GM12878 (cell line): ENCODE measurements at regions of chr10 and their contacts with region 1.

Region 1: DNA sequence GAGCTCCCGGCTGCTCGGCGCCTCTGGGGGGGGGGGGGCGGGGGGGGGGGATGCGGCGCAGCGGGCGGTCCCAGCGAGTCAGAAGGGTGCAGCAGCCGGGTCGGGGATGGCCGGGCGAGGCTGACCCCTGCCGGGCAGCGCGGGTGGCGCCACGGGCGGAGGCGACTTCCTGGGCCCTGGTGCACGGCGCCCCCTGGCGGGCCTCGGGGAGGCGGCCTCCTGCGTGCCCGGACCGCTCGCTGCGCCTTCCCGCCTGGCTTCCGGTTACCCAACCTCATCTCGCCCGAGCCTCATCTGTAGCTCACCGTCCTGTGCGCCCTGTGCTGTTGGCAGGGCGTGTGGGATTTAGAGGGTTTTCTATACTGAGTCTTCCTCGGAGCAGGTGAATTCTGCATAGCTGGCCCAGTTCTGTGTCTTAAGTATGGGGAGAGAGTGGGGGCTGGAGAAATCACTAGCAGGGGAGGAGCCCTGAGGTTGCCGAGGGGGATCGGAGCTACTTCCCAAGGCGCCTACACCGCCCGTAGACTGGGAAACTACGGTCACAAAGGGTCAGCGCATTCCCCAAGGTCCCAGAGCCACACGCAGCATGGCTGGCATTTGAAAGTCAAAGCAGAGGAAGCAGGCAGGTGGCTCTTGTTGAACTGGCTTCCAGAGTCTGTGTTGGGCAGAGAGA is 28.3 kb upstream of the WDFY4 start:
- DNase-seq: peak; percentile 90
- ATAC-seq: peak; percentile 91
- H3K4me3 ChIP-seq: peak overlapping the region; percentile 68
- H3K27ac ChIP-seq: no peak overlapping the region
- H3K4me1 ChIP-seq: peaks cover 11% of the 10 kb centered on the region
- H3K27me3 ChIP-seq: no peaks in the 10 kb centered on the region
- CTCF ChIP-seq: peak; percentile 86 to 100 (median 96); a peak in 5 of 6 replicates
- EP300 ChIP-seq: no peak
- POLR2A ChIP-seq: 0 out of 2 replicates have a peak, but pooled peaks have one; percentile 43
- RAD21 ChIP-seq: peak; percentile 93

Region 2: DNA sequence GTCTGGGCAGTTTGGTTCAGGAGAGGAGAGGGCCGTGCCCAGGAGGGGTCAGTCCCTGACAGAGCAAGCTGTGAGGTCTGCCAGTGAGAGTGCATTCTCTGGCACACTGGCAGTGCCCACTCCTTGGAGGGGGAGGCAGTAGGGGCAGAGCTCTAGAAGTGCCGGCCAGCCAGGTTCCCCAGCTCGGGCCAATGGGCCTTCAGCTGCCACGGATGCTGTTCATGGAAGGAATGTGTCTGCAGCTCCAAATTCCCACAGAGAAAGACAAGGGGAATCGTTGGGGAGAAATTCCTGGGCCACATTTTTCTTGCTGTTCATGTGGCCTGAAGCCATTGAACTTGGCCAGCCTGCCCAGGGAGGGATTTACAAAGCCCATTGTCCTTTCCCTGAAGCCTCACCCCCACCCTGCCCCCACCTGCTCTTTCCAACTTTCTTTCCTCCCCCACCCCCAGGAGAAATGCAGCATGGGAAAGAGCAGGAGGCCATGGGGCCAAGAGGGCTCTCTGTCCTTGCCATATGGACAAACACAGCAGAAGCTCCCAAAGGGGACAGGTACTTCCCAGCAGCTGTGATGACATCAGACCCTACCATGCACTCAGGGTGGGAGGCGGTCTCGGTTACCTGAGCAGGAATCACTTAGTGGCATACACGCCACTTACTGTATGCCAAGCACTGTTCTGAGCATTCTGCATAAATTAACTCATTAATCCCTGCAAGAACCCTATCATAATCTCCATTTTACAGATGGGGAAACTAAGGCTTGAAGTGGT is 122.2 kb before region 1 on chr10:
- CTCF ChIA-PET with region 1: interaction called, 16 read pairs
- POLR2A ChIA-PET with region 1: no interaction called
- RAD21 ChIA-PET with region 1: interaction called, 7 read pairs
- SMC1A ChIA-PET with region 1: interaction called, 3 read pairs
- in situ Hi-C with region 1: no loop called
- intact Hi-C with region 1: no loop called
- DNase-seq: no peak
- ATAC-seq: peak; percentile 52
- H3K4me3 ChIP-seq: no peak overlapping the region
- H3K27ac ChIP-seq: no peak overlapping the region
- H3K4me1 ChIP-seq: no peaks in the 10 kb centered on the region
- H3K27me3 ChIP-seq: no peaks in the 10 kb centered on the region
- CTCF ChIP-seq: no peak
- EP300 ChIP-seq: no peak
- POLR2A ChIP-seq: no peak
- RAD21 ChIP-seq: no peak

Region 3: DNA sequence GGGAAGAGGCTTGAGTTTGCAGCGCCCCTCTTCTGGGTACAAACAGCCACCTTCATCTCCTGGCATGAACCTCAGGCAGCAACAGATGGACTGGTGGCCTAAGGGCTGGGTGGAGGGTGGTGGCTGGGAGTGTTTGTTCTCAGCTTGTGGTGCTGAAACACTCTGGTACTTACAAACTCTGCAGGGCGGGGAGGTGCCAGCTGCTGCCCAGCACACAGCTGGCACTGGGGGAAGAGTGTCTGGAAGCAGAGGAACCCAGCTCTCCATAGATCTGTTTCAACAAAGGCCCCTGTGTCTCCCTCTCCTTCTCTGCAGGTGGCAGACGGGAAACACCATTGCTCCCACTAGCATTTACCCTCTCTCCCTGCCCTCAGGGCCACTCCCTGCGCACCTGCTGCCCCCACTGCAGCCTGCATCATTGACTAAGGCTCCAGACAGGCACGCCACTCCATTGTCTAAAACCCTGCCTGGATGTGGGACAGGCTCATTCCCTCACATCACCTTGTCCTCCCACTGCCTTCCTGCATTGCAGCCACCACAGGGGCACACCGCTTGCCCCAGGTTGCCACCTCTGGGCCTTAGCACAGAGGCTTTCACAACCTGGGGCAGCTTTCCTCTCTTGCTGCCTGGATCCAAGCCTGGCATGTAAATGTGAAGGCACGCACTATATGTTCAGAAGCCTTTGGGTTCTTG is 58.0 kb before region 1 on chr10:
- CTCF ChIA-PET with region 1: interaction called, 664 read pairs
- POLR2A ChIA-PET with region 1: no interaction called
- RAD21 ChIA-PET with region 1: interaction called, 383 read pairs
- SMC1A ChIA-PET with region 1: interaction called, 24 read pairs
- in situ Hi-C with region 1: no loop called
- intact Hi-C with region 1: no loop called
- DNase-seq: no peak
- ATAC-seq: no peak
- H3K4me3 ChIP-seq: no peak overlapping the region
- H3K27ac ChIP-seq: no peak overlapping the region
- H3K4me1 ChIP-seq: no peaks in the 10 kb centered on the region
- H3K27me3 ChIP-seq: no peaks in the 10 kb centered on the region
- CTCF ChIP-seq: no peak
- EP300 ChIP-seq: no peak
- POLR2A ChIP-seq: no peak
- RAD21 ChIP-seq: no peak

Region 4: DNA sequence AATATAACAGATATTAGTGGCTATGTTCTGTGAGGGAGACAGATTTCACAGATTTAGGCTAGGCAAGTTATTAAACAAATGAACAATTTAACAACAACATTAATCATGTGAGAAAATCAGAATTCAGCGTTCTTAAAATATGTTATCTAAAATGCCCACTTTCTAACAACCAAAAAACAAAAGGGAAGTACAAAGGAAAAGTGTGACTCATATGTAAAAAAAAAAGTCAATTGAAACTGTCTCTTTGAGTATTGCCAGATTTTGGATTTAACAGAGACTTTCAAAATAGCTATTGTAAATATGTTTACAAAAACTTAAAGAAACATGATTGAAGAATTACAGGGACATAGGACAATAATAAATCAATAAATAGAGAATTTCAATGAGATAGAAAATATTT is 16.7 kb before region 1 on chr10:
- CTCF ChIA-PET with region 1: interaction called, 45 read pairs
- POLR2A ChIA-PET with region 1: interaction called, 3 read pairs
- RAD21 ChIA-PET with region 1: interaction called, 48 read pairs
- SMC1A ChIA-PET with region 1: interaction called, 50 read pairs
- in situ Hi-C with region 1: no loop called
- intact Hi-C with region 1: no loop called
- DNase-seq: no peak
- ATAC-seq: peak; percentile 30
- H3K4me3 ChIP-seq: peak overlapping the region; percentile 10; the same call in 1 of the 2 replicates
- H3K27ac ChIP-seq: peak overlapping the region; percentile 53; the same call in 1 of the 2 replicates
- H3K4me1 ChIP-seq: peaks cover 19% of the 10 kb centered on the region
- H3K27me3 ChIP-seq: no peaks in the 10 kb centered on the region
- CTCF ChIP-seq: no peak
- EP300 ChIP-seq: no peak
- POLR2A ChIP-seq: no peak
- RAD21 ChIP-seq: no peak

Region 5: DNA sequence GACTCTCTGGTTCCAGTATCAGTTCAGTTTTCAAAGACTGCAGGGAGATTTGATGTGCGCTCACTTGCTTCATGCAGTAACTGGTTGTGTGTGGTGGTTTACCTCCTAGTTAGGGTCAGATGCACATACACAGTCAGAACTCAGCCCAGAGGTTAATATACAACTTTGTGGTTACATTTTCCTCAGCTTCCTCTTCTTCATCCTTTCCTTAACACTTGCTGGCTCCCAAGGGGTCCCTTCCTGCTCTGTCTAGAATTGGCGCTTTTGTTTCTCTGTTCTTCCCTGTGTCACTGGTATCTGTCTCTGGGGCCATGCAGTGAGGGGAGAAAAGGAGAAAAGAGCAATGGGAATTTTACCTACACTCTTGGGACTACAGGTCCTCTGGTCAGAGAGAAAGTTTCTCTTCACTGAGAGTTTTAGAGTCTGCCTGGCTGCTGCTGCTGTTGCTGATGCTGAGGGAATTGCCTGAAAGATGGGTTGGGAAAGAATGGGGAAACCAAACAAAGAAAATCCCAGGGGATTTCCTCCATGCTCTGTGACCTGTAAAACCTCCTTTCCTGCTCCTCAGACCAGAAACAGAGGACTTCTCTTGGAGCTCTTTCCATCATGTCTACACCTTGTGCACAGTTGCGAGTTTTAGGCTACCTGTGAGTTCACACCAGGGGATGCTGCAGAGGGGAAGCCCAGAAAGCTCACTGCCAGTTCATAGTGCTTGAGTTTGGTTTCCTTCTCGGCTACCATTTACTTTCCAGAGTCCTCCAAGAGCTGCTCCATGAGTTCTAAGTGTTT is 102.9 kb after region 1 on chr10:
- CTCF ChIA-PET with region 1: interaction called, 24 read pairs
- POLR2A ChIA-PET with region 1: no interaction called
- RAD21 ChIA-PET with region 1: interaction called, 17 read pairs
- SMC1A ChIA-PET with region 1: interaction called, 18 read pairs
- in situ Hi-C with region 1: no loop called
- intact Hi-C with region 1: loop called (anchors 2 kb)
- DNase-seq: peak; percentile 81
- ATAC-seq: peak; percentile 96
- H3K4me3 ChIP-seq: no peak overlapping the region
- H3K27ac ChIP-seq: peak overlapping the region; percentile 76
- H3K4me1 ChIP-seq: peaks cover 23% of the 10 kb centered on the region
- H3K27me3 ChIP-seq: no peaks in the 10 kb centered on the region
- CTCF ChIP-seq: 0 out of 6 replicates have a peak, but pooled peaks of 1 of the 3 experiments have one; percentile 2
- EP300 ChIP-seq: peak; percentile 78 to 83; a peak in 3 of 4 replicates
- POLR2A ChIP-seq: no peak
- RAD21 ChIP-seq: no peak

Region 6: DNA sequence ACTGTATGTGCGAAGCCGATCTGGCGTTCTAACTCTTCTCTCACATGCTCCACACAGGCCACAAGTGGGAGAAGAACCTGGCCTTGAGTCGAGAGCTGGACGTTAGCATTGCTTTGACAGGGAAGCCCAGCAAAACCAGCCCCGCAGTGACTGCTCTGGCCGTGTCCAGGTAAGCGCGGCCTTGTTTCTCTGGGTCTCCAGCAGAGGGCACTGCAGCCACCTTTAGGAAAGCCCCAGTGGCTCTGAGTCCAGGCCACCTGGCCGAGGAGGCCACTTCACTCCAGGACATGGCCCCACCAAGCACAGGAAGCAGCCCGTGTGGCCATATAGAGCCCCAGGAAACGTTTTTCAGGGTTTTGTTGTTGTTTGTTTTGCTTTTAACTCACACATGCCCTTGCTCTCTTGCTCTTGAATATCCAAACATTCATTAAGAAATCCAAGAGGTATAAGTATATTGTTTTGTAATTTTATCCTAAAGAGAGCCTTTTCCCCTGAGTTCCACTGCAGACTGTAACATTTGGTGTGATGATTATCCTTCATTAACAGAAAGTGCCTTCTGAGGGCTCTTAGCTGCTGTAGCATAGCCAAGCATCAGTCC is 325.0 kb after region 1 on chr10:
- CTCF ChIA-PET with region 1: interaction called, 6 read pairs
- POLR2A ChIA-PET with region 1: no interaction called
- RAD21 ChIA-PET with region 1: interaction called, 7 read pairs
- SMC1A ChIA-PET with region 1: interaction called, 3 read pairs
- in situ Hi-C with region 1: no loop called
- intact Hi-C with region 1: loop called (anchors 2 kb)
- DNase-seq: no peak
- ATAC-seq: peak; percentile 88
- H3K4me3 ChIP-seq: no peak overlapping the region
- H3K27ac ChIP-seq: no peak overlapping the region
- H3K4me1 ChIP-seq: no peaks in the 10 kb centered on the region
- H3K27me3 ChIP-seq: no peaks in the 10 kb centered on the region
- CTCF ChIP-seq: peak; percentile 70 to 81 (median 80)
- EP300 ChIP-seq: no peak
- POLR2A ChIP-seq: no peak
- RAD21 ChIP-seq: peak; percentile 67

Region 7: DNA sequence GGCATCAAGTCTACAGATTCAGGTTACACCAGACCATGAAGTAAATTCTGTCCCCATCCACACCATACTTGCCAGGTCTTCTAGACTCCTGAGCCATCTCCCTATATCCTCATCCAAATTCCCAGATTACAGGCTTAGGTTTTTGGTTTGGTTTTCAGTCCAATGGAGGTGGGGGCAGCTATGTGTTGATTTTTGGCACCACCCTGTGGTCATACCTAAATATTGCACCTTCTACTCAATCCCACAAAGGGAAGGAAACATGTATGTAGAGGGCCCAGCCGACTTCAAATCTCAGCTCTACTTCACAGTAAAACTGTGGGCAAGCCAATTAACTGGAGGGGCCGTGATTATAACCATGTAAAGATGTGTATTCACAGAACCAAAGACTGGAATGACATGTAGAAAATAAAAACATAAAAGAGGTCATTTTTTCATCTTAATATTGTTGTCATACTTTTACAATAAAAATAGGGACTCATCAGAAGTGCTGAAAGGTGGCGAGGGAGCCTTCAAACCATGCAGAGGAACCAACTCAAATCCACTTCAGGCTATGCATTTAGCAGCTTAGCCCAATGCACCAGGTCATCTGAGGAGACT is 862.7 kb after region 1 on chr10:
- CTCF ChIA-PET with region 1: interaction called, 24 read pairs
- POLR2A ChIA-PET with region 1: no interaction called
- RAD21 ChIA-PET with region 1: interaction called, 21 read pairs
- SMC1A ChIA-PET with region 1: interaction called, 4 read pairs
- in situ Hi-C with region 1: no loop called
- intact Hi-C with region 1: loop called (anchors 5 kb)
- DNase-seq: no peak
- ATAC-seq: peak; percentile 93
- H3K4me3 ChIP-seq: no peak overlapping the region
- H3K27ac ChIP-seq: no peak overlapping the region
- H3K4me1 ChIP-seq: no peaks in the 10 kb centered on the region
- H3K27me3 ChIP-seq: no peaks in the 10 kb centered on the region
- CTCF ChIP-seq: peak; percentile 58 to 75 (median 66)
- EP300 ChIP-seq: no peak
- POLR2A ChIP-seq: no peak
- RAD21 ChIP-seq: peak; percentile 72